Activated CD8-positive, alpha-beta T cell treated with anti-CD3 and anti-CD28 coated beads for 36 hours (primary cell): ENCODE measurements at regions of chr11 and their contacts with region 1.

Region 1: GRCh38 chr11:65911682-65912568 is 6.9 kb downstream of the C11orf68 start:
- DNase-seq: no peak
- ATAC-seq: no peak
- H3K4me3 Mint-ChIP-seq: no peak overlapping the region
- H3K27ac Mint-ChIP-seq: no peak overlapping the region
- H3K4me1 Mint-ChIP-seq: peaks cover 20% of the 10 kb centered on the region
- H3K27me3 Mint-ChIP-seq: peaks cover 4% of the 10 kb centered on the region
- CTCF ChIP-seq: no peak

Region 2: GRCh38 chr11:65900125-65900898 is 11.6 kb before region 1 on chr11 and contains the start of gene FOSL1:
- CTCF ChIA-PET with region 1: interaction called, 7 read pairs
- POLR2A ChIA-PET with region 1: interaction called, 12 read pairs
- intact Hi-C with region 1: no loop called
- DNase-seq: peak; percentile 97
- ATAC-seq: peak; percentile 88
- H3K4me3 Mint-ChIP-seq: peak within 1 kb of the TSS; percentile 80
- H3K27ac Mint-ChIP-seq: peak within 1 kb of the TSS; percentile 86
- H3K4me1 Mint-ChIP-seq: peaks cover 32% of the 10 kb centered on the region
- H3K27me3 Mint-ChIP-seq: peaks cover 5% of the 10 kb centered on the region
- CTCF ChIP-seq: no peak
- total RNA-seq, gene FOSL1: 9.9 to 10.2 TPM